RWPE1 (cell line): ENCODE measurements at regions of chr5 and their contacts with region 1.

Region 1: DNA sequence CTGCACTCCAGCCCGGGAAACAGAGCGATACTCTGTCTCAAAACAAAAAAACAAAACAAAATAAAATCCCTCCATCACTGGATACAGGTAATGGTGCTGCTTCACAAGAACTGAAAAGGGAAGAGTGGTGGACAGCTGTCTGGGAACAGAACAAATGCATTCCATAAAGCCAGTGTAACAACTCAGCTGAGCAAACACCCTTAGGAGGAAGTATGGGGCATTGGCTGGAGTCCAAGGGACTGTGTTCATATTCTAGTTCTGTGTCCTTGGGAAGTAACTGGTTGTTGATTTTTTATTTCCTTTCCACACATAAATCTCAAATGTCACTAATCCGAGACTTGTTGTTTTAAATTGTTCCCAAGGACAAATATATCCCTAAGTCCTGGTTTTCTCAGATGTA is 38.3 kb downstream of the HTR1A start:
- DNase-seq: peak; percentile 16
- H3K27ac ChIP-seq: no peak overlapping the region
- CTCF ChIP-seq: no peak

Region 2: GRCh38 chr5:62489471-62489870 is 1434.4 kb before region 1 on chr5:
- CTCF ChIA-PET with region 1: no interaction called
- POLR2A ChIA-PET with region 1: no interaction called
- DNase-seq: no peak
- H3K27ac ChIP-seq: no peak overlapping the region
- CTCF ChIP-seq: no peak

Region 3: GRCh38 chr5:63596254-63596653 is 327.7 kb before region 1 on chr5:
- CTCF ChIA-PET with region 1: no interaction called
- POLR2A ChIA-PET with region 1: no interaction called
- DNase-seq: no peak
- H3K27ac ChIP-seq: no peak overlapping the region
- CTCF ChIP-seq: no peak

Region 4: GRCh38 chr5:63953217-63953616 is 29.3 kb after region 1 on chr5:
- CTCF ChIA-PET with region 1: interaction called, 10 read pairs
- POLR2A ChIA-PET with region 1: no interaction called
- DNase-seq: no peak
- H3K27ac ChIP-seq: no peak overlapping the region
- CTCF ChIP-seq: no peak